Left colon (tissue), 2 donors: ENCODE measurements at regions of chr17 and their contacts with region 1.

Region 1: GRCh38 chr17:31433091-31433790 is 41.8 kb downstream of the RAB11FIP4 start:
- DNase-seq: no peak
- ATAC-seq: no peak

Region 2: DNA sequence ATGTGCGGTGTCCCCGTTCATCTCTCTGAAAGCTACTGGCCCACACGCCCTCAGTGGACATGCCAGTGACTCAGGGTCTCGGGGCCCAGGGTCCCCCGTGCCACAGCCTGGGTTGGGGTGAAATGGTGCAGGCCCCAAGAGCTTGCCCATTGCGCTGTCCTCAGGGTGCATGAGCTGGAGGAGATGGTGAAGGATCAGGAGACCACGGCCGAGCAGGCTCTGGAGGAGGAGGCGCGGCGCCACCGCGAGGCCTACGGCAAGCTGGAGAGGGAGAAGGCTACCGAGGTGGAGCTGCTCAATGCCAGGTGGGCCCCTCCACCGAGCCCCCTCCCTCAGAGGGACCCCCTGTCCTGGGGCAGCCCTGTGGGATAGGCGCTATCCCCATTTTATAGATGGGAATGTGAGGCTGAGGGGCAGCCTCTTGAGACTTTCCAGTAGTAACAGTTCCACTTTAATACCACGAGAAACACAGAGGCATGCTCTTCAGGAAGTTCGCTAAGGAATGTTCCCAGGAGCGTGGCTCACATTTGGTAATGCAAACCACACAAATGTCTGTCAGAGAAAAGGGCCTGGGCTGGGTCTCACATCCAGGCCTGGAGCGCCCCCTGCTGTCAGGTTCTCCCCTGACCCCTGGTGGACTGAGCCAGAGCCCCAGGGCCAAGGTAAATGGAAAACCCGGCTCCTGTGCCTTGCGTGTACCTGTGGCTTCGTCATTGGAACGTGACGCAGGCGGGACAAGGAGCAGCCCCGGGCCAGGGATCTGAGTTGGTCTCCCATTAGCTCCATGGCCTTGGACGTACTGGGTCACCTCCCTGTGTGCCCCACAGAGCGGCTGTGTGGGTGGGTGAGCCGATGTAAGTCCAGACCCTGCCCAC is 91.9 kb after region 1 on chr17:
- intact Hi-C with region 1: loop called (anchors 5 kb)
- DNase-seq: peak; percentile 76 to 96
- ATAC-seq: peak; percentile 86

Region 3: GRCh38 chr17:31842183-31843069 is 409.2 kb after region 1 on chr17:
- intact Hi-C with region 1: loop called in 1 of 2 experiments (anchors 10 kb)
- DNase-seq: peak; percentile 65 to 72
- ATAC-seq: peak; percentile 87